Naive thymus-derived CD4-positive, alpha-beta T cell (primary cell): ENCODE measurements at regions of chr10 and their contacts with region 1.

Region 1: DNA sequence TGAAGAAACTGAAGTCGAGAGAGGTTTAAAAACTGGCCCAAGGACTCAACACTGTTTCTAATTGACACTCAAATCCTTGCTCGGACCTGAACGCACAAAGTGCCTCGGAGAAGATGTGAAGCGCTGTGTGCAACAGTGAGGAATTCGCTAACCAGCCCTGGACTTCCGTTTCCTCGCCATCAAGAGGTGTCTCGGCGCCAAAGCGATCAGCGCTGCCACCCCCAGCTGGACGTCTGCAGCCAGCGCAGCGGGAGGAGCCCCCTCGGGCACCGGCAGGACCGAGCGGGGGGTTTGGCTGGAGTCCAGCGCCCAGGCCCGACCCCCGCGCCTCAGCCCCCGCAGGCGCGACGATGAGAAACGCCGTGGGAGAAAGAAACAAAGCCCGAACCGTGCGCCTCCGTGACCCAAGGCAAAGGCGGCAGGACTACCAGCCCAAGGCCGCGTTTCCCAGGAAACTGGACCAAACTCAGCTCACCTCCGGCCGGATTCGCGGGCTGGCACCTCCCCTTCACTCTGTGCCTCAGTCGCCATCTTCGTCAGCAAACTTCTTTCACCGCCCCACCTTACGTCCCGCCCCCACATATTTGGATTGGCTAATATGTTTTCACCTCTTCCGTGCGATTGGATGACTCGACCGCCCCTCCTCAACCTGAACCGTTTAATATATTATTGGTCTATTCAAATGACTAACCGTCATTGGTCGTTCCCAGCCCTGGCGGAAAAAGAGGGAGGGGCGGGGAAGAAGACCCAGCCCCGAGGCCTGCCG is at the start of gene ARHGAP19:
- DNase-seq: peak; percentile 65 to 97 (median 95)
- ATAC-seq: peak; percentile 100
- H3K4me3 ChIP-seq: peak within 1 kb of the TSS; percentile 88
- H3K4me3 Mint-ChIP-seq: peak within 1 kb of the TSS; percentile 83 to 97 (median 95)
- H3K27ac ChIP-seq: peak within 1 kb of the TSS; percentile 83
- H3K27ac Mint-ChIP-seq: peak within 1 kb of the TSS; percentile 32 to 98 (median 92)
- H3K4me1 ChIP-seq: peaks cover 4 to 8% of the 10 kb centered on the region in 2 donors
- H3K4me1 Mint-ChIP-seq: peaks cover 17 to 26% (median 24%) of the 10 kb centered on the region in 7 donors
- H3K27me3 ChIP-seq: no peaks in the 10 kb centered on the region
- H3K27me3 Mint-ChIP-seq: peaks cover 0 to 4% (median 0%) of the 10 kb centered on the region in 5 donors
- total RNA-seq, gene ARHGAP19: 12.8 to 40.1 (median 16.1) TPM

Region 2: GRCh38 chr10:97037365-97038361 is 254.6 kb before region 1 on chr10:
- CTCF ChIA-PET with region 1: no interaction called
- POLR2A ChIA-PET with region 1: no interaction called
- intact Hi-C with region 1: no loop called
- DNase-seq: peak; percentile 35 to 72 (median 61)
- ATAC-seq: peak; percentile 89
- H3K4me3 ChIP-seq: peak overlapping the region; percentile 66
- H3K4me3 Mint-ChIP-seq: peak overlapping the region; percentile 64 to 85 (median 81)
- H3K27ac ChIP-seq: no peak overlapping the region
- H3K27ac Mint-ChIP-seq: peak overlapping the region in 2 of 9 donors; percentile 63 to 75
- H3K4me1 ChIP-seq: no peaks in the 10 kb centered on the region
- H3K4me1 Mint-ChIP-seq: peaks cover 12 to 20% (median 16%) of the 10 kb centered on the region in 7 donors
- H3K27me3 ChIP-seq: no peaks in the 10 kb centered on the region
- H3K27me3 Mint-ChIP-seq: peaks cover 2 to 13% (median 9%) of the 10 kb centered on the region in 5 donors

Region 3: DNA sequence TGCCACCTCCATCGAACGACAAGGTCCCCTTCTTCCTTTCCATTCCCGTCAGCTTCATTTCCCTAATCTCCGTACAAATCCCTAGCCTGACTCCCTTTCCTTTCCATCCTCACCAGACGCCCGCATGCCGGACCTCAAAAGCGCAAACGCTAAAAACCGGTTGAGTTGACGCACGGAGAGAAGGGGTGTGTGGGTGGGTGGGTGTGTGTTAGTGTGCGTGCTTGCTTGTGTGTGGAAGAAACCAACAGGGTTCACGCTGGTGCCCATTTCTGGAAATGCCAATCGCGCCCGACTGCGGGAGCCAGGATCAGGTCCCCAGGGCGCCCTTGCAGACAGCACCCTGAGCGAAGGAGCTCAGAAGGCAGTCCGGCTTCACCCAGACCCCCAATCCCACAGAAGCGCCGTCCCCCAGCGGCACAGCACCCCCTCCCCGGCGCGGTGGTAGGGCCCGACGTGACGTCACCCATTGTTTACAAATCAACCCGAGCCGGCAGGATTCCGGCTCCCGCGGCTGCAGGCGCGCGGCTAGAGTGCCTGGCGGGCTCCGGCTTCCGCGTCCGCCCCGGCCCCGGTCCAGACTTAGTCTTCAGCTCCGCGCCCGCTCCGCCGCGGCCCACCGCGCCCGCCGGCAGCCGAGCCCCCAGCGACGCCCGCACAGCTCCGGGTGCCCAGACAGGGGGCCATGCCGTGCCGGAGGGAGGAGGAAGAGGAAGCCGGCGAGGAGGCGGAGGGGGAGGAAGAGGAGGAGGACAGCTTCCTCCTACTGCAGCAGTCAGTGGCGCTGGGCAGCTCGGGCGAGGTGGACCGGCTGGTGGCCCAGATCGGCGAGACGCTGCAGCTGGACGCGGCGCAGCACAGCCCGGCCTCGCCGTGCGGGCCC is 26.7 kb after region 1 on chr10 and contains the start of gene FRAT1:
- CTCF ChIA-PET with region 1: interaction called, 4 read pairs
- POLR2A ChIA-PET with region 1: interaction called, 22 read pairs
- intact Hi-C with region 1: loop called (anchors 1 kb)
- DNase-seq: peak; percentile 87 to 99 (median 95)
- ATAC-seq: peak; percentile 87
- H3K4me3 ChIP-seq: peak within 1 kb of the TSS; percentile 92
- H3K4me3 Mint-ChIP-seq: peak within 1 kb of the TSS; percentile 92 to 99 (median 94)
- H3K27ac ChIP-seq: peak within 1 kb of the TSS; percentile 100
- H3K27ac Mint-ChIP-seq: peak within 1 kb of the TSS; percentile 99 to 100 (median 99)
- H3K4me1 ChIP-seq: peaks cover 12 to 18% of the 10 kb centered on the region in 2 donors
- H3K4me1 Mint-ChIP-seq: peaks cover 20 to 40% (median 29%) of the 10 kb centered on the region in 7 donors
- H3K27me3 ChIP-seq: no peaks in the 10 kb centered on the region
- H3K27me3 Mint-ChIP-seq: peaks cover 0 to 20% (median 0%) of the 10 kb centered on the region in 5 donors
- total RNA-seq, gene FRAT1: 5.3 to 41.0 (median 21.8) TPM

Region 4: DNA sequence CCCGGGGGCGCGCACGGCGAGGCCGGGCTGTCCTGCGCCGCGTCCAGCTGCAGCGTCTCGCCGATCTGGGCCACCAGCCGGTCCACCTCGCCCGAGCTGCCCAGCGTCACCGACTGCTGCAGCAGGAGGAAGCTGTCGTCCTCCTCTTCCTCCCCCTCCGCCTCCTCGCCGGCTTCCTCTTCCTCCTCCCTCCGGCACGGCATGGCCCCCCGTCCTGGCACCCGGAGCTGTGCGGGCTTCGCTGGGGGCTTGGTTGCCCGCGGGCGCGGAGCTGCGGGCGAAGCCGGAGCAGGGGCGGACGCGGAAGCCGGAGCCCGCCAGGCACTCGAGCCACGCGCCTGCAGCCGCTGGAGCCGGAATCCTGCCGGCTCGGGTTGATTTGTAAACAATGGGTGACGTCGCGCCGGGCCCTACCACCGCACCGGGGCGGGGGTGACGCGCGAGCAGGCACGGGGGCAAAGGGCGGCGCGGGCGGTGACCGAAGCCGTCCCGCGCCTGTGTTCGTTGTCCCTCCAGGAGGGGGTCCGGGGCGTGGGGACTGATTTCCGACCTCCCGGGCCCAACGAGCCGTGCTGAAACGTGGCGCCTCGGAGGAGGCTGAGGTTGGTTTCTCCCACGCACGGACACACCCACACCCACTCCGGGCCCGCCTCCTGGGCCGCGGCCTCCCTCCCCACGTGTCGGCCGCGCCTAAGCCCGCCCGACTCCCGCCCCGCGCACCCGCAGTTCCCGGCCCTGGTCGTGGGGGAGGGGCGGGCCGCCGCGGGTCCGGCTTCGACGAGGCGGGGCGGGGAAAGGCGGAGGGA is 42.3 kb after region 1 on chr10 and contains the start of gene FRAT2:
- CTCF ChIA-PET with region 1: no interaction called
- POLR2A ChIA-PET with region 1: interaction called, 13 read pairs
- intact Hi-C with region 1: loop called (anchors 1 kb)
- DNase-seq: peak; percentile 85 to 96 (median 92)
- ATAC-seq: peak; percentile 94
- H3K4me3 ChIP-seq: peak within 1 kb of the TSS; percentile 78
- H3K4me3 Mint-ChIP-seq: peak within 1 kb of the TSS; percentile 88 to 98 (median 94)
- H3K27ac ChIP-seq: peak within 1 kb of the TSS; percentile 97
- H3K27ac Mint-ChIP-seq: peak within 1 kb of the TSS; percentile 89 to 97 (median 93)
- H3K4me1 ChIP-seq: peaks cover 20 to 24% of the 10 kb centered on the region in 2 donors
- H3K4me1 Mint-ChIP-seq: peaks cover 28 to 48% (median 42%) of the 10 kb centered on the region in 7 donors
- H3K27me3 ChIP-seq: no peaks in the 10 kb centered on the region
- H3K27me3 Mint-ChIP-seq: peaks cover 0 to 36% (median 0%) of the 10 kb centered on the region in 5 donors
- total RNA-seq, gene FRAT2: 9.3 to 39.7 (median 29.8) TPM

Region 5: GRCh38 chr10:97425964-97426775 is 133.9 kb after region 1 on chr10 and contains the start of gene PGAM1:
- CTCF ChIA-PET with region 1: no interaction called
- POLR2A ChIA-PET with region 1: no interaction called
- intact Hi-C with region 1: loop called in 1 of 2 experiments (anchors 1 kb)
- DNase-seq: peak; percentile 93 to 98 (median 97)
- ATAC-seq: peak; percentile 91
- H3K4me3 ChIP-seq: peak within 1 kb of the TSS; percentile 92
- H3K4me3 Mint-ChIP-seq: peak within 1 kb of the TSS; percentile 83 to 97 (median 95)
- H3K27ac ChIP-seq: peak within 1 kb of the TSS; percentile 87
- H3K27ac Mint-ChIP-seq: peak within 1 kb of the TSS; percentile 77 to 99 (median 95)
- H3K4me1 ChIP-seq: peaks cover 20 to 29% of the 10 kb centered on the region in 2 donors
- H3K4me1 Mint-ChIP-seq: peaks cover 10 to 53% (median 34%) of the 10 kb centered on the region in 7 donors
- H3K27me3 ChIP-seq: no peaks in the 10 kb centered on the region
- H3K27me3 Mint-ChIP-seq: peaks cover 0 to 2% (median 0%) of the 10 kb centered on the region in 5 donors
- total RNA-seq, gene PGAM1: 58.5 to 536 (median 69.8) TPM

Region 6: GRCh38 chr10:97632949-97633884 is 340.9 kb after region 1 on chr10 and contains the start of gene MORN4:
- CTCF ChIA-PET with region 1: no interaction called
- POLR2A ChIA-PET with region 1: no interaction called
- intact Hi-C with region 1: loop called (anchors 1 kb)
- DNase-seq: peak; percentile 82 to 94 (median 92)
- ATAC-seq: peak; percentile 100
- H3K4me3 ChIP-seq: peak within 1 kb of the TSS; percentile 91
- H3K4me3 Mint-ChIP-seq: peak within 1 kb of the TSS; percentile 92 to 100 (median 98)
- H3K27ac ChIP-seq: peak within 1 kb of the TSS; percentile 50
- H3K27ac Mint-ChIP-seq: peak within 1 kb of the TSS; percentile 82 to 96 (median 92)
- H3K4me1 ChIP-seq: peaks cover 0 to 10% of the 10 kb centered on the region in 2 donors
- H3K4me1 Mint-ChIP-seq: peaks cover 10 to 18% (median 16%) of the 10 kb centered on the region in 7 donors
- H3K27me3 ChIP-seq: no peaks in the 10 kb centered on the region
- H3K27me3 Mint-ChIP-seq: no peaks in the 10 kb centered on the region
- total RNA-seq, gene MORN4: 0.78 to 4.1 (median 1.5) TPM